CD4-positive, alpha-beta memory T cell (primary cell): ENCODE measurements at regions of chr10 and their contacts with region 1.

Region 1: DNA sequence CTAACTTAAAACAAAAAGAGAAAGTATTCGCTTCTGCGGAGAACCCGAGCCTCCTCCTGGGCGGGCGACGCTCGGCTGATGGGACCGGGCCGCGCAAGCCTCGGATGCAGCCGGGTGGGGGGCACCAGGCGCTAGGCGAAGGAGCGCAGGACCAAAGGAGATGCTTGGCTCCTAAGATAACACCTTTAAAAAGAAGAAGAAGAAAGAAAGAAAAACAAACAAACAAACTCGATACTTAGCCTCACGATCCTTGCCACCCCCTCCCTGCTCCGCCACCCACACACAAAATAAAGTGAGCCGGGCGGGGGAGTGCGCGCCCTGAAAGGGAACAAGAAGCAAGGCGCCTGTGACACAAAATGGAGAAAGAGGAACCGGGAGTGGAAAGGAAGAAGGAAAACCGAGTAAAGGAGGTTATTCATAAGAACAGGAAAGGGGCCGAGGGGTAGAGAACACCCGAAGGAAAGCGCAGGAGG is 34.0 kb upstream of the EBLN1 start:
- DNase-seq: peak; percentile 76 to 80 (median 78)
- H3K4me3 ChIP-seq: peak overlapping the region; percentile 70 to 97
- H3K4me3 Mint-ChIP-seq: peak overlapping the region; percentile 89 to 99 (median 96)
- H3K27ac ChIP-seq: peak overlapping the region; percentile 78
- H3K27ac Mint-ChIP-seq: peak overlapping the region; percentile 96 to 100 (median 98)
- H3K4me1 ChIP-seq: peaks cover 43% of the 10 kb centered on the region
- H3K4me1 Mint-ChIP-seq: peaks cover 12 to 58% (median 35%) of the 10 kb centered on the region in 4 donors
- H3K27me3 ChIP-seq: no peaks in the 10 kb centered on the region
- H3K27me3 Mint-ChIP-seq: peaks cover 0 to 2% of the 10 kb centered on the region in 2 donors

Region 2: DNA sequence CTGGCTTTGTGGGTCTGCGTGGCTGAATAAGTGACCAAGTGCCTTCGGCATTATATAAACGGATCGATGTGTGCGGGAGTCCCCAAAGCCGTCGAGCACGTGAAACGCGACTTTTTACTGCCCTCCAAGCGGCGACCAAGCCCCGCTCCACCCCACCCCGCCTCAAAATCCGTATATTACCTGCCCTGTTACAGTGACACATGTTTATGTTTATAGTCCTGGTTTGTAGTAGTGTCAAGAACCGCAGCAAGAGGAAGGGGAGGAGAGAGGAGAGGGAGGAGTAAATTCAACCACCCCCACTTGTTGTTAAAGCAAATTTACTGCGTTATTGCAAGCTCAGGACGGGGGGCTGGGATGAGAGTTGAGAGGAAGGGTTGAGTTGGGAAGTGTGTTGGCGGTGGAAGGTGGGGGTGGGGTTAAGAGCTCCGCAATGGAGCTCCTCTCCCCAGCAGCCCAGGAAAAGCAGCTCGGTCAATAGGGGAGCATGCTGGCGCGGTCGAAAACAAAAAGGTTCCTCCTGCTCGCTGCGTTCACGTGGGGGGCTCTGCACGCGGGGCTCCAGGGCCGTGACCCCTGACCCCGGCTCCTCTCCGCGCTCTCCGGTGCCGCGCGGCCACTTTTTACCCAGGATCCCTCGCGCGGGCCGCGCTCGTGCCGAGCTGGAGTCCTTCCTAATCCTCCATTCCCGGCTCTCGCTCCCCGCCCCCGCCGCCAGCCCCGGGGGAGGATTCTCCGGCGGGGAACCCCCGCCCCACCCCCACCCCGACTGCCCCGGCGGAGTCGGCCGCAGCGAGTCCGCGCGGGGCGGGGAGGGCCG is 726.2 kb before region 1 on chr10 and contains the start of gene SKIDA1:
- CTCF ChIA-PET with region 1: no interaction called
- POLR2A ChIA-PET with region 1: interaction called, 5 read pairs
- intact Hi-C with region 1: loop called (anchors 10 kb)
- DNase-seq: peak; percentile 69 to 81 (median 75)
- H3K4me3 ChIP-seq: peak within 1 kb of the TSS; percentile 55 to 78
- H3K4me3 Mint-ChIP-seq: peak within 1 kb of the TSS; percentile 93 to 99 (median 96)
- H3K27ac ChIP-seq: peak within 1 kb of the TSS; percentile 63
- H3K27ac Mint-ChIP-seq: peak within 1 kb of the TSS; percentile 84 to 98 (median 98)
- H3K4me1 ChIP-seq: peaks cover 23% of the 10 kb centered on the region
- H3K4me1 Mint-ChIP-seq: peaks cover 9 to 36% (median 21%) of the 10 kb centered on the region in 4 donors
- H3K27me3 ChIP-seq: peaks cover 7% of the 10 kb centered on the region
- H3K27me3 Mint-ChIP-seq: peaks cover 9 to 12% of the 10 kb centered on the region in 2 donors
- total RNA-seq, gene SKIDA1: 0.39 to 0.73 TPM

Region 3: GRCh38 chr10:22158426-22158825 is 93.4 kb before region 1 on chr10:
- CTCF ChIA-PET with region 1: no interaction called
- POLR2A ChIA-PET with region 1: no interaction called
- intact Hi-C with region 1: no loop called
- DNase-seq: no peak
- H3K4me3 ChIP-seq: no peak overlapping the region
- H3K4me3 Mint-ChIP-seq: peak overlapping the region in 2 of 8 donors; percentile 4 to 11
- H3K27ac ChIP-seq: no peak overlapping the region
- H3K27ac Mint-ChIP-seq: no peak overlapping the region
- H3K4me1 ChIP-seq: peaks cover 11% of the 10 kb centered on the region
- H3K4me1 Mint-ChIP-seq: peaks cover 3 to 17% (median 10%) of the 10 kb centered on the region in 4 donors
- H3K27me3 ChIP-seq: no peaks in the 10 kb centered on the region
- H3K27me3 Mint-ChIP-seq: peaks cover 2 to 3% of the 10 kb centered on the region in 2 donors

Region 4: DNA sequence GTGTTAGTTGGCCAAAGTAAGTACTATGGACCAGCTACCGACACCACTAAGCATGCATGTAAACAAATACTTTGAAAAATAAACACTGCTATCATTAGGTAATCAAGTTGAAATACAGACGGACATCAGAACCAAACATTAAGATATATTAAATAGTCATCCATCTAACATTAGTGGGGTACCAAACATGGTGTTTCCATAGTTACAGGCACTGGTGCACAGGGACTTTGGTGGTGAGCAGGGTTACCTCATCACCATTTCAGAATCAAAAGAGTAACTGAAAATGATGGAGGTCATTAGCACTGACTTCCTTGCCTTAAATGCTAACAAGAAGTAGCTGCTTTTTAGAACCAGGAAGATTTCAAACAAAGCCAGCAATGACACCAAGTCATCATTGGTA is 57.8 kb before region 1 on chr10:
- CTCF ChIA-PET with region 1: no interaction called
- POLR2A ChIA-PET with region 1: no interaction called
- intact Hi-C with region 1: no loop called
- DNase-seq: no peak
- H3K4me3 ChIP-seq: no peak overlapping the region
- H3K4me3 Mint-ChIP-seq: no peak overlapping the region
- H3K27ac ChIP-seq: no peak overlapping the region
- H3K27ac Mint-ChIP-seq: no peak overlapping the region
- H3K4me1 ChIP-seq: no peaks in the 10 kb centered on the region
- H3K4me1 Mint-ChIP-seq: no peaks in the 10 kb centered on the region
- H3K27me3 ChIP-seq: no peaks in the 10 kb centered on the region
- H3K27me3 Mint-ChIP-seq: peaks cover 3% of the 10 kb centered on the region in 2 donors

Region 5: DNA sequence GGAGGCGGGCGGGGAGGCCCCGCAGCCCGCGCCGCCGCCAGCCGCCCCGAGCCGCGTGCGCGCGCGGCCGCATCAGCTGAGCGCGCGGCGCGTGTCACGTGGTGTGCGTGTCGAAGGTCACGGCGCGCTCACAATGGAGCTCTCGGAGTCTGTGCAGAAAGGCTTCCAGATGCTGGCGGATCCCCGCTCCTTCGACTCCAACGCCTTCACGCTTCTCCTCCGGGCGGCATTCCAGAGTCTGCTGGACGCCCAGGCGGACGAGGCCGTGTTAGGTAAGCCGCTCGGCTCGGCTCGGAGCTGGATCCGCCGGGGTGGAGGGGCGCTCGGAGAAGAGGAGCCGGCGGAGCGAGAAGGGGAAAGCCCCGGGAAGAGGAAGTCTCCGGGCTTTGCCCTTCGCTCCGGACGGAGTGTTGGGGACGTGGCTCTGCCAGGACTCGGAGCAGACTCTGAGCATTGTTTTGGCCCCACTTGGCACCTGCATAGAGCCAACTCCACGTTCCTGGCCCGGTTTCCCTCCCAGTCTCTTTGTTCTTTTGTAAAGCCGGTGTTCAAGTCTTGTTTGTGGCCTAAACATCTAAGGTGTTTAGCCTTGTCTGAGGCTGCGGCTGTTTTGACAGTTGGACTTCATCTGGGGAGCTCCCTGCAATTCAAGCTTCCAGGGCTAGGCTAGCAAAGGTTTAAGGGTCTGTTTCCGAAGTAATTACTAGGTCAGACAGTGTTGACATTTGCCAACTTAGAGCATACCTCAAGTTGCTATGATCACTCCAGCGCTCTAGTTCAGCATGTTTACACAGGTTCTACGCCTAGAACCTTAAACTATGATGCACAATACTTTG is 64.7 kb after region 1 on chr10 and contains the start of gene COMMD3:
- CTCF ChIA-PET with region 1: interaction called, 3 read pairs
- POLR2A ChIA-PET with region 1: interaction called, 59 read pairs
- intact Hi-C with region 1: loop called (anchors 1 kb)
- DNase-seq: peak; percentile 78 to 86 (median 82)
- H3K4me3 ChIP-seq: peak within 1 kb of the TSS; percentile 77 to 95
- H3K4me3 Mint-ChIP-seq: peak within 1 kb of the TSS; percentile 94 to 99 (median 98)
- H3K27ac ChIP-seq: peak within 1 kb of the TSS; percentile 71
- H3K27ac Mint-ChIP-seq: peak within 1 kb of the TSS; percentile 89 to 98 (median 98)
- H3K4me1 ChIP-seq: peaks cover 37% of the 10 kb centered on the region
- H3K4me1 Mint-ChIP-seq: peaks cover 22 to 50% (median 29%) of the 10 kb centered on the region in 4 donors
- H3K27me3 ChIP-seq: no peaks in the 10 kb centered on the region
- H3K27me3 Mint-ChIP-seq: peaks cover 3 to 4% of the 10 kb centered on the region in 2 donors
- total RNA-seq, gene COMMD3: 67.9 to 68.5 TPM

Region 6: GRCh38 chr10:22325272-22326144 is 73.7 kb after region 1 on chr10:
- CTCF ChIA-PET with region 1: no interaction called
- POLR2A ChIA-PET with region 1: interaction called, 11 read pairs
- intact Hi-C with region 1: no loop called
- DNase-seq: peak; percentile 83 to 86 (median 84)
- H3K4me3 ChIP-seq: peak overlapping the region; percentile 40 to 68
- H3K4me3 Mint-ChIP-seq: peak overlapping the region; percentile 85 to 94 (median 88)
- H3K27ac ChIP-seq: peak overlapping the region; percentile 65
- H3K27ac Mint-ChIP-seq: peak overlapping the region; percentile 81 to 97 (median 91)
- H3K4me1 ChIP-seq: peaks cover 39% of the 10 kb centered on the region
- H3K4me1 Mint-ChIP-seq: peaks cover 35 to 44% (median 39%) of the 10 kb centered on the region in 4 donors
- H3K27me3 ChIP-seq: no peaks in the 10 kb centered on the region
- H3K27me3 Mint-ChIP-seq: peaks cover 10 to 13% of the 10 kb centered on the region in 2 donors

Region 7: DNA sequence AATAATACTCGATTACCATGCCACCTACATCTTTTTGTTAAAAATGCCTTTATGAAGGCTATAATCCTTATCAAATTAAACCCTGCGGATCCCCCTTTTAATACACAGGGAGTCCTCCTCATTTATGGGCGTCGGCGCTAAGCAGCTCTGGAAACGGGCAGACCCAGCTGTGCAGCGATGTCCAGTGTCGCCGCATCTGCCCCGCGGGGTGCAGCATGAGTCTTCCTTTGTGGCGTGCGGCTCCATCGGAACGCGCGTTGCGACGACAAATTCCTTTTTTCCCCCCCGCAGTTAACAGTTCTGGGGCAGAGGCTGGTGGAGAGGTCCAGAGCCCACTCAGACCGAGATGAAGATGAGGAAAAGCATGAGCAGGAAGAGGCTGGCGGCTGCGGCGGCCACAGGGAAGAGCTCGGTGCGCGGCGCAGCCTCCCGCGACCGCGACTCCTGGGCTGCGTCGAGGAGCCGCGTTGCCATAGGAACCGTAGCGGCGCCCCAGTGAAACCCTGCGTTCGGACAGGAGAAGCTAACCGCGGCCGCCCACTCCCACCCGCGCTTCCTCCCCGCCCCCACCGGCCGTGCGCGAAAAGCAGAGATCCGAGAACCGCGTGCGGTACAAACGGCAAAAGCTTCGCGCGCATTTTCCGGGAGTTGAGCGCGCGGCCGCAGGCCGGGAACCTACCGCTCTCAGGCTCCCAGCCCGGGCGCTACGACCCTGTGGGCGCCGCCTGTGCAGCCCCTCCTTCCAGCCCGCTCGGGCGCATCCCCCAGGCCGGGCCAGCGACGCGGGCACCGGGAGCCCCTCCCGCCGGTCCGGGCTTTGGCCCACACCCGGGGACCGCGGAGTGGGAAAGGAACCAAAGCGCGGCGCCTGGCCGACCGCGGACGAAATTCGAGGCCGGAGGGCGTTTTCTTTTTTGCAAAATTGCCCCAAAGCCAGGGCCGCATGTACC is 224.1 kb after region 1 on chr10:
- CTCF ChIA-PET with region 1: no interaction called
- POLR2A ChIA-PET with region 1: no interaction called
- intact Hi-C with region 1: no loop called
- DNase-seq: peak in 4 of 5 donors; percentile 9 to 19 (median 14)
- H3K4me3 ChIP-seq: peak overlapping the region in 1 of 2 donors; percentile 40
- H3K4me3 Mint-ChIP-seq: peak overlapping the region; percentile 74 to 92 (median 88)
- H3K27ac ChIP-seq: no peak overlapping the region
- H3K27ac Mint-ChIP-seq: peak overlapping the region in 1 of 7 donors; percentile 8
- H3K4me1 ChIP-seq: peaks cover 16% of the 10 kb centered on the region
- H3K4me1 Mint-ChIP-seq: peaks cover 5 to 21% (median 12%) of the 10 kb centered on the region in 4 donors
- H3K27me3 ChIP-seq: peaks cover 46% of the 10 kb centered on the region
- H3K27me3 Mint-ChIP-seq: peaks cover 43 to 59% of the 10 kb centered on the region in 2 donors

Region 8: GRCh38 chr10:22550732-22551131 is 298.9 kb after region 1 on chr10:
- CTCF ChIA-PET with region 1: no interaction called
- POLR2A ChIA-PET with region 1: no interaction called
- intact Hi-C with region 1: loop called (anchors 10 kb)
- DNase-seq: peak; percentile 54 to 66 (median 59)
- H3K4me3 ChIP-seq: no peak overlapping the region
- H3K4me3 Mint-ChIP-seq: no peak overlapping the region
- H3K27ac ChIP-seq: no peak overlapping the region
- H3K27ac Mint-ChIP-seq: peak overlapping the region in 4 of 7 donors; percentile 2 to 86 (median 42)
- H3K4me1 ChIP-seq: no peaks in the 10 kb centered on the region
- H3K4me1 Mint-ChIP-seq: peaks cover 12 to 15% (median 13%) of the 10 kb centered on the region in 4 donors
- H3K27me3 ChIP-seq: no peaks in the 10 kb centered on the region
- H3K27me3 Mint-ChIP-seq: no peaks in the 10 kb centered on the region

Region 9: GRCh38 chr10:23095404-23095965 is 843.7 kb after region 1 on chr10 and contains the start of gene MSRB2:
- CTCF ChIA-PET with region 1: no interaction called
- POLR2A ChIA-PET with region 1: no interaction called
- intact Hi-C with region 1: loop called (anchors 10 kb)
- DNase-seq: peak; percentile 51 to 76 (median 63)
- H3K4me3 ChIP-seq: peak within 1 kb of the TSS; percentile 18 to 56
- H3K4me3 Mint-ChIP-seq: peak within 1 kb of the TSS; percentile 87 to 96 (median 91)
- H3K27ac ChIP-seq: peak within 1 kb of the TSS; percentile 44
- H3K27ac Mint-ChIP-seq: peak within 1 kb of the TSS; percentile 84 to 94 (median 93)
- H3K4me1 ChIP-seq: peaks cover 15% of the 10 kb centered on the region
- H3K4me1 Mint-ChIP-seq: peaks cover 23 to 46% (median 36%) of the 10 kb centered on the region in 4 donors
- H3K27me3 ChIP-seq: no peaks in the 10 kb centered on the region
- H3K27me3 Mint-ChIP-seq: no peaks in the 10 kb centered on the region
- total RNA-seq, gene MSRB2: 5.3 to 7.1 TPM